CD8-positive, alpha-beta T cell (primary cell): ENCODE measurements at regions of chr11 and their contacts with region 1.

Region 1: DNA sequence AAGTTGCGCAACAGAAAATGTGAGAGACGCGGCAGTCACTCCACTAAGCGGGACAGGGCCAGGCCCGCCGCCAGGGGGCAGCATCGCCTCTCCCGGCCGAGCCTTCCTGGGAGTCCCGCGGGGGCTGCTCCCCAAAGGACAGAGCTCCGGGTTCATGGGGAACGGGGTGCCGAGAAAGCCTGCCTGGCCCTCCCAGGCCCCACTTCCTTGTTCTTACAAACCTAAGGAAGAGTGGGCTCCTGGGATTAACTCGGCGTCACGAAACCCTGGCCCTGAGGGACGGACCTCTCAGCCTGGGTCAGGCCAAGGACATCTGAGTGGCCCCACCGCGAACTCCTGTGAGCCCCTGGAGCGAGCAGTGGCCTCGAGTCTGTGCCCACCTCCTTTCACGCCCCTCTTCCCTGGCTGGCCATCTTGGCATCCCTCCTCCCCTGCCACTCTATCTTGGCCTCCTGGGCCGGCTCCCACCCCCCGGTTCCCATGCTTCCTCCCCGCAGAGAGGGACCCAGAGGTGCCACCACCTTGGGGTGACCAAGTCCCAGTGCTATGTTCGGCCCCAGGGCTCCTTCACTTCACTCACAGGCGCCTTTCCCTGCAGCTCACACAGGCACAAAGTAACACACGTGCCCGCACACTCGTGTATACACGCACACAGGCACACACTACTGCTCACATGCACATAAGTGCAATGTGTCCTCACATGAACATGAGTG is 99.9 kb upstream of the FGF3 start:
- DNase-seq: peak; percentile 15 to 78 (median 66)
- ATAC-seq: peak; percentile 52
- H3K4me3 ChIP-seq: no peak overlapping the region
- H3K4me3 Mint-ChIP-seq: no peak overlapping the region
- H3K27ac ChIP-seq: no peak overlapping the region
- H3K27ac Mint-ChIP-seq: no peak overlapping the region
- H3K4me1 ChIP-seq: peaks cover 3% of the 10 kb centered on the region
- H3K4me1 Mint-ChIP-seq: peaks cover 5% of the 10 kb centered on the region
- H3K27me3 ChIP-seq: peaks cover 0 to 9% of the 10 kb centered on the region in 2 experiments
- H3K27me3 Mint-ChIP-seq: peaks cover 35% of the 10 kb centered on the region
- CTCF ChIP-seq: peak; percentile 64

Region 2: GRCh38 chr11:69301455-69302401 is 617.4 kb before region 1 on chr11:
- CTCF ChIA-PET with region 1: no interaction called
- POLR2A ChIA-PET with region 1: no interaction called
- intact Hi-C with region 1: no loop called
- DNase-seq: peak in 2 of 9 experiments; percentile 37 to 48
- ATAC-seq: no peak
- H3K4me3 ChIP-seq: no peak overlapping the region
- H3K4me3 Mint-ChIP-seq: no peak overlapping the region
- H3K27ac ChIP-seq: no peak overlapping the region
- H3K27ac Mint-ChIP-seq: no peak overlapping the region
- H3K4me1 ChIP-seq: peaks cover 19% of the 10 kb centered on the region
- H3K4me1 Mint-ChIP-seq: peaks cover 33% of the 10 kb centered on the region
- H3K27me3 ChIP-seq: no peaks in the 10 kb centered on the region
- H3K27me3 Mint-ChIP-seq: no peaks in the 10 kb centered on the region
- CTCF ChIP-seq: no peak

Region 3: GRCh38 chr11:69881449-69882269 is 37.4 kb before region 1 on chr11:
- CTCF ChIA-PET with region 1: no interaction called
- POLR2A ChIA-PET with region 1: no interaction called
- intact Hi-C with region 1: no loop called
- DNase-seq: no peak
- ATAC-seq: no peak
- H3K4me3 ChIP-seq: no peak overlapping the region
- H3K4me3 Mint-ChIP-seq: no peak overlapping the region
- H3K27ac ChIP-seq: no peak overlapping the region
- H3K27ac Mint-ChIP-seq: no peak overlapping the region
- H3K4me1 ChIP-seq: no peaks in the 10 kb centered on the region
- H3K4me1 Mint-ChIP-seq: no peaks in the 10 kb centered on the region
- H3K27me3 ChIP-seq: no peaks in the 10 kb centered on the region
- H3K27me3 Mint-ChIP-seq: peaks cover 9% of the 10 kb centered on the region
- CTCF ChIP-seq: no peak

Region 4: DNA sequence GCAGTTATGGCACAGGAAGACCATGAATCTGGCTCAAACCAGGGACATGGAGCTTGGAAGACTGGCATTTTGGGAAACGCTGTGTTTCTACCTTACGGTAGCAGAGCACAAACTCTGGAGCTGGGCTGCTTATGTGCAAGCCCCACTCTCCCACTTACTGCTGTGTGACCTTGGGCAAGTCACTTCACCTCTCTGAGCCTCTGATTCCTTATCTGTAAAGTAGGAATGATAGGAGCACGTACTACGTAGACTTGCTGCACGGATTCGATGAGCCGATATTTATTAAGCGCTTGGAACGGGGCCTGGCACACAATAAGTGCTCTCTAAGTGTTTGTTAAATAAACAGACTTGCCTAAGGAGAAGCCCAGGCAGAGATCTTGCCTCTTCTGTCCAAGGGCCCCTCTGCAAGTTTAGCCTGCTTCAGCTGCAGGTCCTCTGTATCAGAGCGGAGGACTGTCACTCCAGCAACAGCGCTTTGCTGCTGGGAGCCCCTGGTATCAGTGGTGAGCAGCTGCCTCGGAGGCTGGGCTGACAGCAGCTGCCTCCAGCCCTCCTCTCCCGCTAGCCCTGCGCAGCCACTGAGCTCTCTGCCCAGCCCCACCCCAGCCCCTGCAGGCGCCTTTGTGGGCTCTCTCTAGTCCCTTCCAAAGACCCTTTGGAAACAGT is 62.2 kb after region 1 on chr11:
- CTCF ChIA-PET with region 1: no interaction called
- POLR2A ChIA-PET with region 1: no interaction called
- intact Hi-C with region 1: no loop called
- DNase-seq: no peak
- ATAC-seq: no peak
- H3K4me3 ChIP-seq: no peak overlapping the region
- H3K4me3 Mint-ChIP-seq: no peak overlapping the region
- H3K27ac ChIP-seq: no peak overlapping the region
- H3K27ac Mint-ChIP-seq: no peak overlapping the region
- H3K4me1 ChIP-seq: no peaks in the 10 kb centered on the region
- H3K4me1 Mint-ChIP-seq: no peaks in the 10 kb centered on the region
- H3K27me3 ChIP-seq: peaks cover 5 to 9% of the 10 kb centered on the region in 2 experiments
- H3K27me3 Mint-ChIP-seq: peaks cover 33% of the 10 kb centered on the region
- CTCF ChIP-seq: no peak

Region 5: DNA sequence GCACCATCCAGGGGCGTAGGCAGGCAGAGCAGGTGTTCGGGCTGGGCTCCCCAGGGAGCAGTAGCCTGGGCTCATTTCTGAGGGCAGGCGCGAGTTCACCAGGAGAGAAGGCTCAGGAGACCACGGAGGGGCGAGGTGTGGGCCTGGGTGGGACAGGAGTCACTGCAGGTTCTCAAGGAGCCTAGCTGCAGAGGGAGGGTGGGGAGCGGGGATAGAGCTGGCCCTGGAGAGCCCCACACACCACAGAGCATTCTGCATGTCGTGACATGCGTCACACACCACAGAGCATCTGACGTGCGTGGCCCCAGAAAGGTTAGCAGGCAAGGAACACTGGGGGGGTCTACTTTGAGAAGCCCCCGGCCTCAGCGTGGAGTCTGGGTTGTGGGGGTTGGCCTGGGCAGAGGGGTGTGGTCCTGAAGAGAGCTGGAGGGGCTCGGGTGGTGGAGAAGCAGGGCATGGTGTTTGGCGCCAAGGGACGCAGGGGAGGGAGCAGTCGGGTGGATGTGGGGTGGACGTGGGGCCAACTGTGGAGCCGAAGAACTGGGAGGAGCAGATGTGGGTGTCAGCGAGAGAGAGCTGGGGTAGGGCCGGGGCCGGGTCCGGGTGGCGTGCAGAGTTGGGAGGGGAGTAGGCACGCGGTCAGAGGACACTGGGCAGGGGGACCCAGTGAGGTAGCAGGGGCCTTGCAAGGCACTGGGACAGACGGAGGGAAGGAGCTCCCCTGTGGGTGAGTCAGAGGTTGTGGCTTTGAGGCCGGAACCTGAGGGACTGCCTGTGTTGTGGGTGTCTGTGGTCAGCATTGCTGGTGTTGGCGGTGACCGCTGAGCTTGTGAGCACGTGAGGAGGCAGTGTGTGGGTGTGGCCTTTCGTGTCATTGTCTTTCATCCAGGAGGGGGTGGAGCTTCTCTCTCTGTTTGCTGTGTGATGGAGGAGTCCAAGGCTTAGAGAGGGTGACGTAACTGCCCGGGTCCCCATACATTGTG is 504.7 kb after region 1 on chr11:
- CTCF ChIA-PET with region 1: no interaction called
- POLR2A ChIA-PET with region 1: no interaction called
- intact Hi-C with region 1: loop called in 1 of 2 experiments (anchors 5 kb)
- DNase-seq: peak in 7 of 9 experiments; percentile 13 to 75 (median 30)
- ATAC-seq: peak; percentile 31
- H3K4me3 ChIP-seq: no peak overlapping the region
- H3K4me3 Mint-ChIP-seq: no peak overlapping the region
- H3K27ac ChIP-seq: no peak overlapping the region
- H3K27ac Mint-ChIP-seq: no peak overlapping the region
- H3K4me1 ChIP-seq: peaks cover 9% of the 10 kb centered on the region
- H3K4me1 Mint-ChIP-seq: no peaks in the 10 kb centered on the region
- H3K27me3 ChIP-seq: peaks cover 0 to 8% of the 10 kb centered on the region in 2 experiments
- H3K27me3 Mint-ChIP-seq: no peaks in the 10 kb centered on the region
- CTCF ChIP-seq: no peak